PC-3 (cell line): ENCODE measurements at regions of chr17 and their contacts with region 1.

Region 1: DNA sequence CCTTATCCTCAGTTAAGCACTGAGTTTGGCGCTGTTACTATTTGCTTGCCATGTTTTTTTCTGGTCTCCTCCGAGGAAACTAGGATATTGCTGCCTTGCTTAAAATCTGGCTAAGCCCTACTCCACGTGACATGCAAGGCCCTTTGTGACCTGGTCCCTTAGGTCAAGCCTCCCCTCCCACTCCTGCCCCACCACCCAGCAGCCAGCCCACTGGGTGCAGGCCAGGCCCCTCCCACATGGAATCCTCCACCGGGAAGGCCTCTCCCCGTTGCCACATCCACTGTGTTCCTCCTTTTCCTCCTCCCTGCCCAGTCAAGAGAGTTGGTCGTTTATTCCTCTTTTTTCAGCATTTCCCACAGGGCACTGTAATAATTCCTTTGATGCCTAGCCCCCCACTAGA is 16.2 kb downstream of the PSMD3 start:
- DNase-seq: no peak
- ATAC-seq: no peak
- H3K4me3 ChIP-seq: no peak overlapping the region
- H3K27ac ChIP-seq: no peak overlapping the region
- H3K4me1 ChIP-seq: no peaks in the 10 kb centered on the region
- H3K27me3 ChIP-seq: no peaks in the 10 kb centered on the region
- CTCF ChIP-seq: no peak

Region 2: DNA sequence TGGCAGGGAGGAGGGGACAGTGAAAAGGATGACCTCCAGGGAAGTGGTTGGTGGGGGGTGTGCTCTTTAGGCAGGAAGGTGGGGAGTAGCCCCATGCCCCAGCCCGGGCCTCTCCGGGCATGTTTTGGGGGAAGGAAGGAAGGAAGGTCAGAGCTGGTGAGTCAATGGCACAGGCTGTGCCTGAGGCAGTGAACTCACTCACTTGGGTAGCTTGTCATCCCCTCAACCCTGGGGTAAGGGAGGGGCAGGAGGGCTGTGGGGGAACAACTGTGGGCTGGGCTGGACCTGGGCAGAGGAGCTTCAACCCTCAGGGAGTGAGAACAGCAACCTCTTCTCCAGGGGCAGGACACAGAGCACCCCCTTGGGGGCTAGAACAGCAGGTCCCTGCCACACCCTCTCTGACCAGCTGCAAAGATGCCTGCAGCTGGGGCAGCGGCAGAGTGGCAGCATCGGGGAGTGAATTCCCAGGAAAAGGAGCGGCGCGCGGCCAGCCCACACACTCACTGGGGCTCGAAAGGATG is 24.7 kb after region 1 on chr17:
- CTCF ChIA-PET with region 1: no interaction called
- POLR2A ChIA-PET with region 1: interaction called, 32 read pairs
- intact Hi-C with region 1: no loop called
- DNase-seq: peak; percentile 93
- ATAC-seq: peak; percentile 68
- H3K4me3 ChIP-seq: peak overlapping the region; percentile 41; the same call in 1 of the 2 replicates
- H3K27ac ChIP-seq: peak overlapping the region; percentile 97
- H3K4me1 ChIP-seq: peaks cover 69% of the 10 kb centered on the region
- H3K27me3 ChIP-seq: no peaks in the 10 kb centered on the region
- CTCF ChIP-seq: no peak